Calu3 (cell line): ENCODE measurements at regions of chr5 and their contacts with region 1.

Region 1: GRCh38 chr5:87347272-87347671 is 65.5 kb downstream of the CCNH start:
- DNase-seq: no peak
- H3K4me3 Mint-ChIP-seq: no peak overlapping the region
- H3K27ac Mint-ChIP-seq: no peak overlapping the region
- H3K4me1 Mint-ChIP-seq: peaks cover 11% of the 10 kb centered on the region
- H3K27me3 Mint-ChIP-seq: no peaks in the 10 kb centered on the region
- CTCF ChIP-seq: no peak

Region 2: GRCh38 chr5:87231037-87231819 is 116.0 kb before region 1 on chr5:
- CTCF ChIA-PET with region 1: no interaction called
- intact Hi-C with region 1: no loop called
- DNase-seq: no peak
- H3K4me3 Mint-ChIP-seq: no peak overlapping the region
- H3K27ac Mint-ChIP-seq: no peak overlapping the region
- H3K4me1 Mint-ChIP-seq: peaks cover 11% of the 10 kb centered on the region
- H3K27me3 Mint-ChIP-seq: no peaks in the 10 kb centered on the region
- CTCF ChIP-seq: no peak

Region 3: GRCh38 chr5:87277279-87277835 is 69.9 kb before region 1 on chr5:
- CTCF ChIA-PET with region 1: no interaction called
- intact Hi-C with region 1: no loop called
- DNase-seq: no peak
- H3K4me3 Mint-ChIP-seq: peak overlapping the region; percentile 37
- H3K27ac Mint-ChIP-seq: peak overlapping the region; percentile 47
- H3K4me1 Mint-ChIP-seq: peaks cover 73% of the 10 kb centered on the region
- H3K27me3 Mint-ChIP-seq: no peaks in the 10 kb centered on the region
- CTCF ChIP-seq: no peak

Region 4: DNA sequence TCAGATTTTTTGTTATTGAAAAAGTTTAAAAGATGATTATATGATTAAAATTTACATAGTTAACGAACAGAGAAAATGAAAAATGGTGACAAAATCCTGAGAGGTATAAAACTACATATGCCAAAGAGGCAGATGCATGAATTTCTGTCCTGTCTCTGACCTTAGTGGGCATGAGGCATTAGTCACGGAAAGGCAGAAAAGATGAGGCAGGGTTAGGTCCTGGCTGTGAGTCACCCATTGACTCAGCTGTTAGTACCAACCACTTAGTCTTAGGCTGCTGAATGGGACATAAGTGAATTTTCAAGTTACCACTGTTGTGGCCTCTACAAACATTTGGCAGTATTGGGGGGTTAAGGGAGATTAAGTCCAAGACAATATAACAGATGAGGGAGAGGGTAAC is 46.5 kb before region 1 on chr5:
- CTCF ChIA-PET with region 1: no interaction called
- intact Hi-C with region 1: loop called (anchors 5 kb)
- DNase-seq: peak; percentile 69
- H3K4me3 Mint-ChIP-seq: no peak overlapping the region
- H3K27ac Mint-ChIP-seq: peak overlapping the region; percentile 82
- H3K4me1 Mint-ChIP-seq: peaks cover 93% of the 10 kb centered on the region
- H3K27me3 Mint-ChIP-seq: no peaks in the 10 kb centered on the region
- CTCF ChIP-seq: no peak

Region 5: DNA sequence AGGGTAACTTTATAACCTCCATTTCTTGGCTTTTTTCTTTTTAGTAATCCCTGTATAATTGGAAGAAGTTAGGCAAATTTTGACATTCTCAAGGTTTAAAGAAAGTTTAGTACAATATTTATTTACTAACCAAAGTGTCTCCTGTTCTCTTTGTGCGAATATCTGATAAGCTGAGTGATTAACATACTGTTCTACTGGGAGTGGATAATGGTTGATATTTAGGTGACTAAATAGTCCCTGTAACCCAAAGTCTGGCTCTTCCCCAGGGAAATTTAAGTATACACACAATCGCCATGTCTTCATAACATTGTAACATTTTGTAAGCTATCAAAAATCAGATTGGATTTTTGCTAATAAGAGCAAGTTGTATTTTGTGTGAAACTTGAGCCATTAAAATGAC is 25.4 kb after region 1 on chr5:
- CTCF ChIA-PET with region 1: no interaction called
- intact Hi-C with region 1: no loop called
- DNase-seq: no peak
- H3K4me3 Mint-ChIP-seq: no peak overlapping the region
- H3K27ac Mint-ChIP-seq: peak overlapping the region; percentile 74
- H3K4me1 Mint-ChIP-seq: no peaks in the 10 kb centered on the region
- H3K27me3 Mint-ChIP-seq: no peaks in the 10 kb centered on the region
- CTCF ChIP-seq: no peak